AG04449 (cell line): ENCODE measurements at regions of chr4 and their contacts with region 1.

Region 1: DNA sequence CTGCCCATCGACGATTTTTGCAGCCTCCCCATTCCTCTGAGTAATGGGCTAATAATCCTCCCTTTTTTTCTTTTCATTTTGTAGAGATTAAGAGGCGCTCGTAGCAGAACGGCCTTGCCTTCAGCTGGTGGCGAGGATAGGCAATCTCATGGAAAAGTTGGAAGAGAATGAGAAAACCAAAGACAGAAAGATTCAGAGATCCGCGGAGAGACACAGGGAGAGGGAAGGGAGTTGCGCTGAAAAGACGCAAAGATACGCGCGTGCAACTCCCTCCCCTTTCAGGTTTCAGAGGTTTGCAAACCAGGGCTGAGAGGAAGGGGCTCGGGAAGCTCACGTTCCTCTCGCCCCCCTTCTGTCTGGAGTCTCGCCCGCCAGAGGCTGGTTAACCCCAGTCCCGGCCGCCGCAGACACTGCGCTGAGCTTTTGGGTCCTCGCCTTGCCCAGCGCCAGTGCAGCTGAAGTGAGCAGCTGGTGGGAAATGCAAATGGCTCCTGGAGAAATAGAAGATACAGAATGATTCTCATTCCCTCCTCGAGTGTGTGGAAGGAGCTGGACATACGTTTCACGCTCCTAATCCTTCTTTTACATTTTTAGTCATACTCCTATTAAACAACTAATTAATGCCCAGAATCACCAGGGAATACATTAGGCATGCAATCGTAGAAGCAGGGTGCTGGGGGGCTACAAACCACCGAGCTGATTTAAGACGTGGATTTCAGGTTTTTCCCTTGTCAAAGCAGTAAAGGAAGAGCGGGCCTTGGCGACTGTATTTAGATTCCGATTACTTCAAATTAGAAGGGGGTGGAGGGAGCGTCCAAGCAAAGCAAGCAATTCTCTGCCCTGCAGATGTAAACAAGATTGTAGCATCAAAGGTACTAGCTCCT is 16.6 kb upstream of the PITX2 start:
- DNase-seq: no peak
- H3K4me3 ChIP-seq: no peak overlapping the region
- CTCF ChIP-seq: no peak

Region 2: GRCh38 chr4:110959041-110959643 is 319.7 kb after region 1 on chr4:
- CTCF ChIA-PET with region 1: interaction called, 26 read pairs
- POLR2A ChIA-PET with region 1: no interaction called
- DNase-seq: no peak
- H3K4me3 ChIP-seq: no peak overlapping the region
- CTCF ChIP-seq: peak; percentile 14